Panc1 (cell line): ENCODE measurements at regions of chr15 and their contacts with region 1.

Region 1: GRCh38 chr15:57340682-57341259 is 35.5 kb upstream of the CGNL1 start:
- DNase-seq: peak; percentile 61
- ATAC-seq: peak; percentile 83
- H3K4me3 ChIP-seq: no peak overlapping the region
- H3K27ac ChIP-seq: no peak overlapping the region
- H3K4me1 ChIP-seq: no peaks in the 10 kb centered on the region
- H3K27me3 ChIP-seq: no peaks in the 10 kb centered on the region
- CTCF ChIP-seq: peak; percentile 92

Region 2: DNA sequence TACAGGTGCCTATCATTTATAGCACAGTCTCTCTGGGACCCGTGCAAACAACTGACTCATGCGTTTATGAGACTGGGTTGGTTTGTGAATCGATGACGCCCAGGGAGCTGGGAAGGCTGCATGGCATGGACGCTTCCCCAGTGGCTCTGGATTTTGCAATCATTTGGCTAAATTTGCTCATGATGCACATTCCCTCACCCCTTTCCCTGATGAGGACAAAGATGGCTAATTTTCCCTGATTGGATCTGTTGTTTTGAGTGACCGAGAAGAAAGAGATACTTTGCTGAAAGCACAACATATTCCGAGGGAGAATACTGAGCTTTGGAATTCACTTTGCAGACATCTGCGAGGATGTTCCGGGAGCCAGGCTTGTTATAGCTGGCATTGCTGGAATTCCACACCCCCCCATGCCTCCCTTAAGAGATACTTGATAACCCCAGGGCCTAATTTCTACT is 86.6 kb after region 1 on chr15:
- CTCF ChIA-PET with region 1: no interaction called
- POLR2A ChIA-PET with region 1: no interaction called
- in situ Hi-C with region 1: no loop called
- intact Hi-C with region 1: loop called (anchors 10 kb)
- DNase-seq: no peak
- ATAC-seq: peak; percentile 92
- H3K4me3 ChIP-seq: no peak overlapping the region
- H3K27ac ChIP-seq: peak overlapping the region; percentile 53
- H3K4me1 ChIP-seq: no peaks in the 10 kb centered on the region; the same call in none of the 2 replicates
- H3K27me3 ChIP-seq: peaks cover 2% of the 10 kb centered on the region; the same call in 1 of the 2 replicates
- CTCF ChIP-seq: no peak

Region 3: GRCh38 chr15:57527382-57528091 is 186.8 kb after region 1 on chr15:
- CTCF ChIA-PET with region 1: interaction called, 44 read pairs
- POLR2A ChIA-PET with region 1: no interaction called
- in situ Hi-C with region 1: no loop called
- intact Hi-C with region 1: loop called (anchors 1 kb)
- DNase-seq: peak; percentile 42
- ATAC-seq: peak; percentile 85
- H3K4me3 ChIP-seq: no peak overlapping the region
- H3K27ac ChIP-seq: no peak overlapping the region
- H3K4me1 ChIP-seq: no peaks in the 10 kb centered on the region; the same call in 1 of the 2 replicates
- H3K27me3 ChIP-seq: peaks cover 4% of the 10 kb centered on the region
- CTCF ChIP-seq: peak; percentile 74